HepG2 (cell line): ENCODE measurements at regions of chr17 and their contacts with region 1.

Region 1: GRCh38 chr17:68981288-68981687 is 26.1 kb upstream of the ABCA8 start:
- DNase-seq: peak; percentile 20
- ATAC-seq: no peak
- H3K4me3 ChIP-seq: no peak overlapping the region
- H3K27ac ChIP-seq: no peak overlapping the region
- H3K4me1 ChIP-seq: no peaks in the 10 kb centered on the region
- H3K27me3 ChIP-seq: no peaks in the 10 kb centered on the region
- CTCF ChIP-seq: no peak
- EP300 ChIP-seq: no peak
- POLR2A ChIP-seq: no peak
- RAD21 ChIP-seq: no peak

Region 2: GRCh38 chr17:68961214-68961882 is 19.9 kb before region 1 on chr17:
- CTCF ChIA-PET with region 1: no interaction called
- POLR2A ChIA-PET with region 1: no interaction called
- in situ Hi-C with region 1: no loop called
- intact Hi-C with region 1: no loop called
- DNase-seq: no peak
- ATAC-seq: peak; percentile 71
- H3K4me3 ChIP-seq: no peak overlapping the region; a peak in 1 of 6 replicates
- H3K27ac ChIP-seq: no peak overlapping the region
- H3K4me1 ChIP-seq: peaks cover 10% of the 10 kb centered on the region
- H3K27me3 ChIP-seq: no peaks in the 10 kb centered on the region
- CTCF ChIP-seq: 0 out of 2 replicates have a peak, but pooled peaks have one; percentile 10
- EP300 ChIP-seq: no peak
- POLR2A ChIP-seq: no peak
- RAD21 ChIP-seq: no peak

Region 3: DNA sequence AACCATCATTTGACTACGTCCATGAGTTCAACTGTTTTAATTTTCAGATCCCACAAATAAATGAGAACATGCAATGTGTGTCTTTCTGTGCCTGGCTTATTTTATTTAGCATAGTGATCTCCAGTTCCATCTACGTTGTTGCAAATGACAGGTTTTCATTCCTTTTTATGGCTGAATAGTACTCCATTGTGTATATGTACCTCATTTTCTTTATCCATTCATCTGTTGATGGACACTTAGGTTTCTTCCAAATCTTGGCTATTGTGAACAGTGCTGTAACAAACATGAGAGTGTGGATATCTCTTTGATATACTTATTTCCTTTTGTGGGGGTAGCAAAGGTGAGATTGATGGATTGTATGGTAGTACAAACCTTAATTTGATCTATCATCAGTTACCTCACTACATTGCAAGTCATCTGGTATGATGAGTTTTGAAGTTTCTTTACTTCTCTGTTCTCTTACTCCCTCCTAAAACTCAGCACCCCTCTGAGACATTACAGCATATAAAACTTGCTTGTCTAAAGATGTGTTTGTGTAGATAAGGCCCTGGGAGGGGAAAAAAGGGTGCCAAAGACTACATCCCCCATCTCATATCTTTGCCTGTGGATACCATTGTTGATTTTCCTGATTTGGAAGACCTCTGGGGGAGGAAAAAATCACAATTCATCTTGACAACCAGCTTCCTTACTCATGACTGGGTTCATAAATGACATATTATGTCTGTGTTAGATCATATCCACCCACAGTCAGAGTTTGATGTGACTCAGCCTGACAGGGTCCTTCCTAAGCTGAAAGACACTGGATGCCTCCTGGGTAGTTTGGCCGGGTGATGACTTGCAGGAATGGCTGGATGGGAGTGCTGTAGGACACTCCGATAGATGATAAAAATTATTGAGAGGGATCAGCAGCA is 31.9 kb after region 1 on chr17:
- CTCF ChIA-PET with region 1: no interaction called
- POLR2A ChIA-PET with region 1: no interaction called
- in situ Hi-C with region 1: no loop called
- intact Hi-C with region 1: no loop called
- DNase-seq: no peak
- ATAC-seq: no peak
- H3K4me3 ChIP-seq: no peak overlapping the region
- H3K27ac ChIP-seq: no peak overlapping the region
- H3K4me1 ChIP-seq: peaks cover 27% of the 10 kb centered on the region
- H3K27me3 ChIP-seq: 0 out of 5 replicates have a peak, but pooled peaks cover 0 to 3% of the 10 kb centered on the region in 2 experiments
- CTCF ChIP-seq: no peak
- EP300 ChIP-seq: no peak
- POLR2A ChIP-seq: no peak
- RAD21 ChIP-seq: no peak

Region 4: DNA sequence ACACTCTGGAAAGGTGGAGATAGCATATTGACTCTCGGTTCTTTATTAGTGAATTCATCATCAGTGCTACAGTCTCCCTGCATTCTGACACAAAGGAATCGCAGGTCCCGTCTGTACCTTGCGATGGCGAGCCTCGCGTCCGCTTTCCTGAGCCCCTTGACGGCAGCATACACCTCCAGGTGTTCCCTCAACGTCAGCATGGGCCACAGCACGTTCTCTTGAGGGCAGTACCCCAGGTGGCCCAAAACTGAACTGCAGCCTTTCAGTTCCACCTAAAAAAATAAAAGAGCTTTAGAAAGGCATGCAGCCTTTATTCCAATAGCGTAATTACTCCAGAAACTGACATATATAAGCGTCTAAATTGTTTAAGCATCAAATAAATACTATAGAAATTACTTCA is 103.6 kb after region 1 on chr17:
- CTCF ChIA-PET with region 1: no interaction called
- POLR2A ChIA-PET with region 1: interaction called, 3 read pairs
- in situ Hi-C with region 1: no loop called
- intact Hi-C with region 1: loop called (anchors 5 kb)
- DNase-seq: peak; percentile 50
- ATAC-seq: peak; percentile 92
- H3K4me3 ChIP-seq: no peak overlapping the region
- H3K27ac ChIP-seq: no peak overlapping the region
- H3K4me1 ChIP-seq: peaks cover 5% of the 10 kb centered on the region
- H3K27me3 ChIP-seq: no peaks in the 10 kb centered on the region
- CTCF ChIP-seq: peak; percentile 59
- EP300 ChIP-seq: no peak
- POLR2A ChIP-seq: no peak
- RAD21 ChIP-seq: peak; percentile 42; the same call in 1 of the 2 replicates